ENCODE measurements at regions of chr12 and their contacts with region 1.

Region 1: GRCh38 chr12:48857278-48857994 is 5.5 kb upstream of the DDX23 start:
- DNase-seq: no peak
- H3K4me3 ChIP-seq: no peak overlapping the region
- CTCF ChIP-seq: no peak
- POLR2A ChIP-seq: no peak

Region 2: DNA sequence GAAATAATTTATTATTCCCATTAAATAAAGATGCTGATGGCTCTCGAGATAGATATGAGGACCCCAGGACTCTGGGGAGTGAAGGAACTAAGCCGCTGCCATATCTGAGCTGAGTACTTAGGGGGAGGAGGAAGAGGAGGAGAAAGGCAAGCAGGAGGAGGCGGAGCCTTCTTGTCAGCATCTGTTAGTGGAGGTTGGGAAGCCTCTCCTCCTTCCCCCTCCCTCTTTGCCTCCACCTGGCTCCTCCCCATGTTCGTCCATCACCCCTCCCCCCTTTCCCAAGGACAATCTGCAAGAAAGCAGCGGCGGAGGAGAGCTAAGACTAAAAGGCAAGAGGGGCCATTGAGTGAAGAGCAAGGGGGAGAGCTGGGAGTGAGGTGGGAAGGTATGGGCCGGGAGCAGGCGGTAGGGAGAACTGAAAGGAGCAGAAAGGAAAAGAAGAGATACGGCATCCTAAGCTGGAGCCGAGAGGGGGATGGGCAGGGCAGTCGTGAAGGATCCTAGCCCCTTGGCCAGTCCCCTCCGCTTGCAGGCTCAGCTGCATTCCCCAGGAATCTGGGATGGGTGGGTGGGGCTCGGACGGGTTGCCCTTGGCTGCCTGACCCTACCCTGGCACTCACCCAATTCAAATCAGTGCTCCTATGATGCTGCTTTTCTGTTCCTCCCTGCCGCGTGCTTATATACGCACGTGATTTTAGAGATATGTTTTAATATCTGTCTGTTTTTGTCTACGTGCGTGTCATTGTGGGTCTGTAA is 738.2 kb before region 1 on chr12 and contains the start of gene PFKM:
- intact Hi-C with region 1: no loop called
- DNase-seq: peak; percentile 78 to 91
- H3K4me3 ChIP-seq: peak within 1 kb of the TSS; percentile 61
- CTCF ChIP-seq: no peak
- POLR2A ChIP-seq: no peak
- total RNA-seq, gene PFKM: 15.1 to 28.1 (median 26.0) TPM

Region 3: GRCh38 chr12:48995061-48995879 is 137.8 kb after region 1 on chr12:
- intact Hi-C with region 1: loop called (anchors 5 kb)
- DNase-seq: peak; percentile 71 to 95
- H3K4me3 ChIP-seq: no peak overlapping the region
- CTCF ChIP-seq: no peak
- POLR2A ChIP-seq: no peak